ENCODE measurements at regions of chr5 and their contacts with region 1.

Region 1: DNA sequence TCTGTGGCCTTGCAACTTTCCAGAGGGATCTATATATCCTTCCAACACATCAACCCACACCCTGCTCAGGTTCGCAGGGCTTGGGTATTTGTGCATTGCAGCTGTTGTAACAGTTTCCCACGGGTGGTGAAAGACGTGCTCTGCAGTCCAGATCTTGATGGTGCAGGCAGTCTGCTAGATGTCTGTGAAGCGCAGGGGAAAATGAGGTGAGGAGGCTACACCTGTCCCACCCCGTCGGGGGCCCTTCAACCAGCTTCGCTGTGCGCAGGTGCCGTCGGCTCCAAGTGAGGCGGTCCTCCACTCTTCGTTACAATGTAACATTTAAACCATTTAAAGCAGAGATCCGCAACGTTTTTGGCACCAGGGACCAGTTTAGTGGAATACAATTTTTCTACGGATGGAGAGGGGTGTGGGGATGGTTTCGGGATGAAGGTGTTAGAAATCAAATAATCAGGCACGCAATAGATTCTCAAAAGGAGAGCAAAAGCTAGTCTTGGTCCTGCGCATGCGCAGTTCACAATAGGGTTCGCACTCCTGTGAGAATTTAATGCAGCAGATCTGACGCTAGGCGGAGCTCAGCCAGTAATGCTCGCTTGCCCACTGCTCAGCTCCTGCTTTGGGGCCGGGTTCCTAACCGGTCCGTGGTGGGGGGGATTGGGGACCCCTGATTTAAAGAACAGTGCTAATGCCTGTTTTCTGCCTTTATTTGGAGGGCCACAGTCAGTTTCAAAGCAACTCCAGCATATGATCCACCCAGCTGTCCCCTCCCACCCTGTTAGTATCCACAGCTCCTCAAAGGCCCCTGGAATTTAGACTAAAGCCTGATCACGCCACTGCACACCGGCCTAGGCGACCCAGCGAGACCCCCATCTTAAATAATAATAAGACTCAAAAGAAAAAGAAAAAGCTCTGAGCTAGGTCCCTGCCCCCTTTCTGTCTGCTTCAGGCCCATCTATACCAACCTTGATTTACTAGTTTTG is 97.1 kb upstream of the SELENOP start:
- DNase-seq: peak; percentile 76 to 96 (median 87)
- ATAC-seq: peak; percentile 88 to 94 (median 92)
- H3K4me3 ChIP-seq: peak overlapping the region; percentile 56 to 61
- H3K4me3 Mint-ChIP-seq: peak overlapping the region; percentile 88 to 98 (median 91)
- H3K27ac ChIP-seq: peak overlapping the region; percentile 38
- H3K27ac Mint-ChIP-seq: peak overlapping the region; percentile 87 to 97
- H3K4me1 ChIP-seq: peaks cover 0 to 12% of the 10 kb centered on the region in 2 experiments
- H3K4me1 Mint-ChIP-seq: peaks cover 11 to 17% (median 16%) of the 10 kb centered on the region in 3 donors
- H3K27me3 ChIP-seq: peaks cover 0 to 3% of the 10 kb centered on the region in 2 experiments
- H3K27me3 Mint-ChIP-seq: peaks cover 3 to 7% of the 10 kb centered on the region in 2 donors

Region 2: GRCh38 chr5:42950440-42951292 is 41.9 kb after region 1 on chr5:
- CTCF ChIA-PET with region 1: interaction called, 5 to 31 read pairs
- POLR2A ChIA-PET with region 1: interaction called in 1 of 2 experiments, 5 read pairs
- DNase-seq: peak; percentile 17 to 80 (median 41)
- ATAC-seq: peak; percentile 17 to 58 (median 44)
- H3K4me3 ChIP-seq: peak overlapping the region; percentile 77 to 98
- H3K4me3 Mint-ChIP-seq: peak overlapping the region; percentile 96 to 98 (median 98)
- H3K27ac ChIP-seq: peak overlapping the region; percentile 99
- H3K27ac Mint-ChIP-seq: peak overlapping the region; percentile 100
- H3K4me1 ChIP-seq: peaks cover 15 to 46% of the 10 kb centered on the region in 2 experiments
- H3K4me1 Mint-ChIP-seq: peaks cover 34 to 45% (median 40%) of the 10 kb centered on the region in 3 donors
- H3K27me3 ChIP-seq: no peaks in the 10 kb centered on the region
- H3K27me3 Mint-ChIP-seq: no peaks in the 10 kb centered on the region

Region 3: GRCh38 chr5:42994246-42995151 is 85.7 kb after region 1 on chr5:
- CTCF ChIA-PET with region 1: interaction called, 5 to 16 read pairs
- POLR2A ChIA-PET with region 1: interaction called in 1 of 2 experiments, 9 read pairs
- DNase-seq: peak; percentile 73 to 91 (median 82)
- ATAC-seq: peak; percentile 62 to 72 (median 66)
- H3K4me3 ChIP-seq: peak overlapping the region; percentile 83 to 95
- H3K4me3 Mint-ChIP-seq: peak overlapping the region; percentile 99 to 100 (median 100)
- H3K27ac ChIP-seq: peak overlapping the region; percentile 89
- H3K27ac Mint-ChIP-seq: peak overlapping the region; percentile 100
- H3K4me1 ChIP-seq: peaks cover 22 to 32% of the 10 kb centered on the region in 2 experiments
- H3K4me1 Mint-ChIP-seq: peaks cover 29 to 37% (median 35%) of the 10 kb centered on the region in 3 donors
- H3K27me3 ChIP-seq: no peaks in the 10 kb centered on the region
- H3K27me3 Mint-ChIP-seq: no peaks in the 10 kb centered on the region

Region 4: DNA sequence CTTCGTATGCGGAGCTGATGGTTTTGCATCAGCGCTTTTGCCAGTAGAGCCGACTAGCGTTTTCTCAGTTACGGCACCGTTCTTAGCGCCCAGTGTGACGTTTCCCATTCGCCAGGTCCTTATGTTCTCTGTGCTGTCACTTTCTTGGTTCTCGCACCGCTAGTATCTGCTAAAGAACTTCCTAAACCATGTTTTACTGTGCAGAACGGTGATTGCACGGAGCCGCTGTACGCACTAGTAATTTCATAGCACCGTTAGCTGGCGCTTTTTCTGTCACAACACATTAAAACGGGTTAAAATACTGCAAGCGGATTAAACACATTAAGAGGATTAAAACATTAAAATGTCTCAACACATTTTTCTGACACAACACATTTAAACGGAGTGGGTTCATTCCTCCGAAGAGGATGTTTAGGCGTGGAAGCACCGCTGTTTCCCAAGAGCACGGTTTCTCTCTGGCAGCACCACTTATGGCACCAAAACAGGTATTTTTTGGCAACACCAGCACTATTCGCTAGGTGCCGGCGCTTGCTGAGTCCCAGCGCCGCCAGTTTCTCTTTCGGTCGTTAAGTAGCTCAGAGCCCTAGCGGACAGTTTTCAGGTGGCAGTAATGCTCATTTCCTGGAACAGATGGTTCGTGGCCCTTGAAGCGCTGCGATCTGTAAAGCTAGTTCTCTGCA is 111.0 kb after region 1 on chr5:
- CTCF ChIA-PET with region 1: interaction called, 4 to 37 read pairs
- POLR2A ChIA-PET with region 1: interaction called in 1 of 2 experiments, 4 read pairs
- DNase-seq: peak; percentile 65 to 95 (median 86)
- ATAC-seq: peak; percentile 67 to 74 (median 70)
- H3K4me3 ChIP-seq: peak overlapping the region; percentile 70 to 92
- H3K4me3 Mint-ChIP-seq: peak overlapping the region; percentile 90 to 98 (median 98)
- H3K27ac ChIP-seq: peak overlapping the region; percentile 98
- H3K27ac Mint-ChIP-seq: peak overlapping the region; percentile 98 to 100
- H3K4me1 ChIP-seq: peaks cover 31 to 35% of the 10 kb centered on the region in 2 experiments
- H3K4me1 Mint-ChIP-seq: peaks cover 41 to 46% (median 42%) of the 10 kb centered on the region in 3 donors
- H3K27me3 ChIP-seq: no peaks in the 10 kb centered on the region
- H3K27me3 Mint-ChIP-seq: no peaks in the 10 kb centered on the region

Region 5: GRCh38 chr5:43313035-43313853 is 404.4 kb after region 1 on chr5 and contains the start of gene HMGCS1:
- CTCF ChIA-PET with region 1: interaction called, 4 to 21 read pairs
- POLR2A ChIA-PET with region 1: interaction called in 1 of 2 experiments, 3 read pairs
- DNase-seq: peak; percentile 96 to 100 (median 99)
- ATAC-seq: peak; percentile 89 to 92 (median 90)
- H3K4me3 ChIP-seq: peak within 1 kb of the TSS; percentile 81 to 88
- H3K4me3 Mint-ChIP-seq: peak within 1 kb of the TSS; percentile 93 to 95 (median 93)
- H3K27ac ChIP-seq: peak within 1 kb of the TSS; percentile 95
- H3K27ac Mint-ChIP-seq: peak within 1 kb of the TSS; percentile 84 to 97
- H3K4me1 ChIP-seq: peaks cover 12 to 14% of the 10 kb centered on the region in 2 experiments
- H3K4me1 Mint-ChIP-seq: peaks cover 27 to 48% (median 41%) of the 10 kb centered on the region in 3 donors
- H3K27me3 ChIP-seq: no peaks in the 10 kb centered on the region
- H3K27me3 Mint-ChIP-seq: no peaks in the 10 kb centered on the region
- total RNA-seq, gene HMGCS1: 29.2 to 49.1 (median 36.2) TPM